IMR-90 (cell line): ENCODE measurements at regions of chr4 and their contacts with region 1.

Region 1: DNA sequence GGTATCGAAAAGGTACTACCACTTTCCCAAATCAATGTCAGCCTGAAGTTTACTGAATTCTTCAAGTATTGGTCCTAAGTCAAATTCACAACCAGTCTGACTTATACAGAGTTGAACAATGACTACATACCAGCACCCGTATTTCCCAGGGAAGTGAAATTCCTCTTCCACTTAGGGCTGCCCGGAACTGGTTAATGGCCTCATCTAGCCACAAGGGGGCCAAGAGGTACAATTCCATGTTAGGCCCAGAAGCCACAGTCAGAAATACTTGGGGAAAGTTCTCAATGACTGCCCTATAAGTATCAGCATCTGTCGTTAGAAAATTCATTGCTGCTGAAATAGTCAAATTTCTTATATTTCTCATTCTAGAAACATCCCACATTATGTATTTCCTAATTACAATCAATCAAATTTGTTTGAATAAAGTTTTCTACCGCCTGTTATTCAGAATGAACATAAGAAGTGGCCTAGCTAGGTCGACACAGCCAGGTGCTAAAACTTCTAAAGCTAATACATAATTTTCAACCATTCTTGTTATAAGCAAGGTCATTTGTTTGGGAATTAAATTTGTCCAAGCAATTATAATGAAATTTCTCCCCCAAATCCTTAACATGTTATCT is 5.7 kb upstream of the PCDH7 start:
- DNase-seq: peak; percentile 59
- ATAC-seq: 0 out of 2 replicates have a peak, but pooled peaks have one; percentile 5
- H3K4me3 ChIP-seq: no peak overlapping the region
- H3K27ac ChIP-seq: no peak overlapping the region
- H3K4me1 ChIP-seq: peaks cover 2% of the 10 kb centered on the region; the same call in 1 of the 2 replicates
- H3K27me3 ChIP-seq: no peaks in the 10 kb centered on the region
- CTCF ChIP-seq: peak; percentile 77
- POLR2A ChIP-seq: no peak
- RAD21 ChIP-seq: peak; percentile 73

Region 2: GRCh38 chr4:30295652-30296051 is 418.9 kb before region 1 on chr4:
- CTCF ChIA-PET with region 1: no interaction called
- POLR2A ChIA-PET with region 1: no interaction called
- dilution Hi-C with region 1: no loop called
- in situ Hi-C with region 1: no loop called
- intact Hi-C with region 1: no loop called
- DNase-seq: no peak
- ATAC-seq: no peak
- H3K4me3 ChIP-seq: no peak overlapping the region
- H3K27ac ChIP-seq: no peak overlapping the region
- H3K4me1 ChIP-seq: no peaks in the 10 kb centered on the region
- H3K27me3 ChIP-seq: no peaks in the 10 kb centered on the region
- CTCF ChIP-seq: no peak
- POLR2A ChIP-seq: no peak
- RAD21 ChIP-seq: no peak

Region 3: GRCh38 chr4:31045724-31046318 is 331.3 kb after region 1 on chr4:
- CTCF ChIA-PET with region 1: interaction called, 3 read pairs
- POLR2A ChIA-PET with region 1: no interaction called
- dilution Hi-C with region 1: no loop called
- in situ Hi-C with region 1: no loop called
- intact Hi-C with region 1: loop called (anchors 5 kb)
- DNase-seq: peak; percentile 24
- ATAC-seq: peak; percentile 42; the same call in 1 of the 2 replicates
- H3K4me3 ChIP-seq: no peak overlapping the region
- H3K27ac ChIP-seq: no peak overlapping the region
- H3K4me1 ChIP-seq: no peaks in the 10 kb centered on the region
- H3K27me3 ChIP-seq: no peaks in the 10 kb centered on the region
- CTCF ChIP-seq: peak; percentile 46
- POLR2A ChIP-seq: no peak
- RAD21 ChIP-seq: peak; percentile 52

Region 4: GRCh38 chr4:31078661-31079060 is 364.1 kb after region 1 on chr4:
- CTCF ChIA-PET with region 1: no interaction called
- POLR2A ChIA-PET with region 1: interaction called, 17 read pairs
- dilution Hi-C with region 1: no loop called
- in situ Hi-C with region 1: no loop called
- intact Hi-C with region 1: no loop called
- DNase-seq: no peak
- ATAC-seq: no peak
- H3K4me3 ChIP-seq: no peak overlapping the region
- H3K27ac ChIP-seq: no peak overlapping the region
- H3K4me1 ChIP-seq: no peaks in the 10 kb centered on the region
- H3K27me3 ChIP-seq: no peaks in the 10 kb centered on the region
- CTCF ChIP-seq: no peak
- POLR2A ChIP-seq: no peak
- RAD21 ChIP-seq: no peak

Region 5: DNA sequence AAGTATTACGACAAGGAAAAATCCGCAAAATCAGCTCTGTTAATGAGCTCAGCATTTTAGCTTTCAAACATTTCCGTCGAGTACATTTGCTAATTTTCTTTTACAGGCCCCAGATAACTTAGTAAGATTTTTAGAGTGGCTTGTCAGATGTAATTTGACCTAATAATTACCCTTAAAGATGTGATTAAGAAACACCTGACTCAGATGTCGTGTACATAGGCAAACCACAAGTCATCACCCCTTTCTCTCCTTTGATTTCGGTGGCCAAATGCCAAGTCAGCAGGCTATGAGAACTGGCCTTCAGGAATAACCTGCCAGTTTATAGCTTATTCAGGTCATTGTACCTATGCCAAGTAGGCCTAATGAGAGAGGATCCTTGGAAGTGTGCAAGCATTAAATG is 375.3 kb after region 1 on chr4:
- CTCF ChIA-PET with region 1: no interaction called
- POLR2A ChIA-PET with region 1: no interaction called
- dilution Hi-C with region 1: no loop called
- in situ Hi-C with region 1: no loop called
- intact Hi-C with region 1: loop called (anchors 2 kb)
- DNase-seq: peak; percentile 57
- ATAC-seq: no peak
- H3K4me3 ChIP-seq: no peak overlapping the region
- H3K27ac ChIP-seq: no peak overlapping the region
- H3K4me1 ChIP-seq: peaks cover 5% of the 10 kb centered on the region
- H3K27me3 ChIP-seq: no peaks in the 10 kb centered on the region
- CTCF ChIP-seq: no peak
- POLR2A ChIP-seq: no peak
- RAD21 ChIP-seq: no peak

Region 6: GRCh38 chr4:31370866-31371465 is 656.4 kb after region 1 on chr4:
- CTCF ChIA-PET with region 1: interaction called, 4 read pairs
- POLR2A ChIA-PET with region 1: no interaction called
- dilution Hi-C with region 1: no loop called
- in situ Hi-C with region 1: no loop called
- intact Hi-C with region 1: loop called (anchors 2 kb)
- DNase-seq: peak; percentile 28
- ATAC-seq: peak; percentile 79
- H3K4me3 ChIP-seq: no peak overlapping the region
- H3K27ac ChIP-seq: no peak overlapping the region
- H3K4me1 ChIP-seq: no peaks in the 10 kb centered on the region
- H3K27me3 ChIP-seq: no peaks in the 10 kb centered on the region
- CTCF ChIP-seq: peak; percentile 57
- POLR2A ChIP-seq: no peak
- RAD21 ChIP-seq: peak; percentile 57

Region 7: GRCh38 chr4:31674313-31674947 is 959.9 kb after region 1 on chr4:
- CTCF ChIA-PET with region 1: no interaction called
- POLR2A ChIA-PET with region 1: no interaction called
- dilution Hi-C with region 1: no loop called
- in situ Hi-C with region 1: loop called (anchors 5 kb)
- intact Hi-C with region 1: loop called (anchors 1 kb)
- DNase-seq: peak; percentile 8
- ATAC-seq: peak; percentile 70
- H3K4me3 ChIP-seq: no peak overlapping the region
- H3K27ac ChIP-seq: no peak overlapping the region
- H3K4me1 ChIP-seq: no peaks in the 10 kb centered on the region
- H3K27me3 ChIP-seq: no peaks in the 10 kb centered on the region
- CTCF ChIP-seq: peak; percentile 45
- POLR2A ChIP-seq: no peak
- RAD21 ChIP-seq: peak; percentile 48

Region 8: GRCh38 chr4:31692402-31692940 is 978.0 kb after region 1 on chr4:
- CTCF ChIA-PET with region 1: no interaction called
- POLR2A ChIA-PET with region 1: no interaction called
- dilution Hi-C with region 1: no loop called
- in situ Hi-C with region 1: no loop called
- intact Hi-C with region 1: loop called (anchors 5 kb)
- DNase-seq: no peak
- ATAC-seq: 0 out of 2 replicates have a peak, but pooled peaks have one; percentile 29
- H3K4me3 ChIP-seq: no peak overlapping the region
- H3K27ac ChIP-seq: no peak overlapping the region
- H3K4me1 ChIP-seq: no peaks in the 10 kb centered on the region
- H3K27me3 ChIP-seq: no peaks in the 10 kb centered on the region
- CTCF ChIP-seq: 0 out of 2 replicates have a peak, but pooled peaks have one; percentile 21
- POLR2A ChIP-seq: no peak
- RAD21 ChIP-seq: 0 out of 2 replicates have a peak, but pooled peaks have one; percentile 17